ENCODE measurements at regions of chr2 and their contacts with region 1.

Region 1: GRCh38 chr2:171598713-171599319 is 76.5 kb downstream of the CYBRD1 start:
- DNase-seq: peak; percentile 82
- H3K4me3 ChIP-seq: no peak overlapping the region
- H3K27ac ChIP-seq: no peak overlapping the region
- H3K4me1 ChIP-seq: no peaks in the 10 kb centered on the region
- CTCF ChIP-seq: peak; percentile 95

Region 2: GRCh38 chr2:171687287-171688128 is 88.7 kb after region 1 on chr2 and contains the start of gene DYNC1I2:
- CTCF ChIA-PET with region 1: no interaction called
- POLR2A ChIA-PET with region 1: interaction called, 4 read pairs
- intact Hi-C with region 1: loop called (anchors 5 kb)
- DNase-seq: peak; percentile 87
- H3K4me3 ChIP-seq: peak within 1 kb of the TSS; percentile 87
- H3K27ac ChIP-seq: peak within 1 kb of the TSS; percentile 38
- H3K4me1 ChIP-seq: peaks cover 9% of the 10 kb centered on the region
- CTCF ChIP-seq: no peak
- total RNA-seq, gene DYNC1I2: 42.3 and 57.8 TPM in 2 replicates

Region 3: DNA sequence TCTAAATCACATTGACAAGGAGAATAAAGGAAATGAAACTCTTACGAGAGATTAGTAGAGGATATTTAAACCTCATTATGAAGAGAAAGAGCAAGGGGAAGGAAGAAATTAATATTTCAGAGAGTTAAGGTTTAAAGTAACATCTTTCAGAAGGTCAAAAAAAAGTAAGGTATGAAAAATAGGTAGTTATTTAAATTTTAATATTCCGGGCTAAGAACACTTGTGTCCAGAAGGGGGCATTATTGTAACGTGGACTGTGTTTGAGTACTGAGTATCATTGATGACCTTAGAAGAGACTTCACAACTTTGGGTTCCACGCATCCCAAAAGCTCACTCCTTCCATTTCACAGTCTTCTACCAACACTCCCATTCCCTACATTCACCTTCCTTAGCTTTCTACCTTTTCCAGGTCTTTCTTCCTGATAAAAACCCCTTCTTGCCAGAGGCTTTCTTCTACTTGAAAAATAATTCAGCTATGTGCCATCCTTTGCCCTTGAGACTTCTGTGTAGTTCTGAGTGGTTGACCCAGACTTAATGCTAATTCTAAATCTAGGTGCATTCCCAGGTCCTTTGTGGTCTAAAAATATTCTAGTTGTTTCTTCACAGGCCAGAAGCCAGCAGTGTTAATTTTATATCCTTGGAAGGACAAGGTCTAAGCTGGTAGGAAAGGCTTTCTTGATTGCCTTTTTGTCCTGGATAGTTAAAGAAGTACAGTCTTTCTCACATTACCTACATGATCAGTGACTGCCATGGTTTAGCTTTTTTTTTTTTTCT is 104.9 kb after region 1 on chr2:
- CTCF ChIA-PET with region 1: no interaction called
- POLR2A ChIA-PET with region 1: no interaction called
- intact Hi-C with region 1: loop called (anchors 5 kb)
- DNase-seq: peak; percentile 56
- H3K4me3 ChIP-seq: no peak overlapping the region
- H3K27ac ChIP-seq: no peak overlapping the region
- H3K4me1 ChIP-seq: peaks cover 9% of the 10 kb centered on the region
- CTCF ChIP-seq: peak; percentile 81